ENCODE measurements at regions of chr10 and their contacts with region 1.

Region 1: GRCh38 chr10:131900350-131901146 is at the start of gene PPP2R2D:
- DNase-seq: peak; percentile 89 to 98 (median 95)

Region 2: GRCh38 chr10:131651674-131652437 is 248.7 kb before region 1 on chr10:
- intact Hi-C with region 1: no loop called
- DNase-seq: peak in 38 of 42 donors; percentile 8 to 72 (median 44)

Region 3: DNA sequence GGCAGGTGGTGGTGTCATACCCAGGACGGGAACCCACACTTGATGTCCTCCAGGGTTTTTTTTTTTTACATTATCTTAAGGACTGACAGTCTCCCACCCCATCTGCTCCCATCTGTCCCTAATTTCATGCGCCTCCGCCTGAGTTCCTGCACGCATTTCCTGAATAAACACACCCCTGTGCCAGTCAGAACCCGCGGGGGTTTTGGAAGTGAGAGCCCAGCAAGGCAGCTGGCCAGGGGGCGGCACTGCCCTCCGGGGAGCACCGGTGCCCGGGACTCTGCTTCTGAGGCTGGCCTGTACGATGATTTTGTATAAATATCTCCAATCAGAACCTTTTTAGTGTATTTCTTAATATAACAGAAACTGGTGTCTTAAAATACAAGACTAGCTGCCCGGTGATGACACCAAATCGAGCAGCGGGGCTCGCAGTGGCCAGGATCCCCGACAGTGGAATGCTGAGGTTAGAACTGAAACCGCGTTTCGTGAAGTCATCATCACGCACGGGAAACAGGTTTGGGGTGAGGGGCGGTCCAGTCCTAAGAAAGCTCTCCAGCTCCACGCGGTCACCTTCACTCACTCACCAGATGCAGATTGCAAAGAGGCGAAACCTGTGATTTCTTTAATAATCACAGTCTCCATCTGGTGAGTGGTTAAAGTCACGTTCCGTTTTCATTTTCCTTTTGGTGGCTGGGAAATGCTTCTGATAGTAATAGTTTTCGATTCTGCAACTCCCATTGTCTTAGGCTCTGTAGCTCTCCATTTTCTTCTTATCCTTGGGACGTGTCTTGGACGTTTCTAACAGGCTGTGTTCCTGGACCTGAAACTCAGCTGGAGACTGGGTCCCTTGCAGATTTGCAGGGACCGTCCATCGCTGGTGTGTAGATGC is 61.5 kb after region 1 on chr10:
- intact Hi-C with region 1: loop called (anchors 5 kb)
- DNase-seq: peak in 12 of 42 donors; percentile 24 to 56 (median 44)

Region 4: GRCh38 chr10:131981429-131982184 is 81.1 kb after region 1 on chr10 and contains the start of gene BNIP3:
- intact Hi-C with region 1: loop called (anchors 2 kb)
- DNase-seq: peak; percentile 65 to 97 (median 92)

Region 5: GRCh38 chr10:132359305-132360040 is 458.9 kb after region 1 on chr10:
- intact Hi-C with region 1: no loop called
- DNase-seq: no peak

Measured in head of caudate nucleus (tissue), 42 donors.